ENCODE measurements at regions of chr2 and their contacts with region 1.

Region 1: DNA sequence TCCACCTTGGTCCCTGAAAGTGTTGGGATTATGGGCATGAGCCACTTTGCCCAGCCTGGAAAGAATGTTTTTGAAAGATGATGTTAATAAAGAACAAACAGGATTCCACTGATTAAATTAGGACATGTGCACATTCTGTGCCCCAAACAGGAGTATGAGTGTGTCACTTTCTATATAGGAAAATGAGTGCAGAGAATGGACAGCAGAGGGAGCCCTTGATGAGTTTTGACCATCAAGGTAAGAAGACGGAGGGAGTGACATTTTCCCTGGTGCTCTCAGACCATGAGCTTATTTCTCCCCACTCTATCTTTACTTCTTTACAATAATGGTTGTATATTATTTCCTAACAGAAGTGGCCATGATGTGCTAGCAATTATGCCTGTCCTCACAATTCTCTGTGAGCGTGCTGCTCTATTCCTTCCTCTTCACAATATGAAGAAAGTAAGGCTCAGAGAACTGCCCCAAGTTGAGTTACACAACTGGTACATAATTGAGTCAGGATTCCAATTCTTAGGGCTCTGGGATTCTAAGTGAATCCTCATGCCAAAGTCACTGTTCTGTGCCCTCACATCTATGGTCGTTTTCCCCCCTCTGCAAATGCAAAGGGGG is 20.6 kb downstream of the RPL37A start:
- DNase-seq: no peak
- ATAC-seq: peak; percentile 86
- H3K4me3 ChIP-seq: no peak overlapping the region
- H3K27ac ChIP-seq: no peak overlapping the region
- H3K4me1 ChIP-seq: no peaks in the 10 kb centered on the region
- H3K27me3 ChIP-seq: no peaks in the 10 kb centered on the region
- CTCF ChIP-seq: peak; percentile 85

Region 2: DNA sequence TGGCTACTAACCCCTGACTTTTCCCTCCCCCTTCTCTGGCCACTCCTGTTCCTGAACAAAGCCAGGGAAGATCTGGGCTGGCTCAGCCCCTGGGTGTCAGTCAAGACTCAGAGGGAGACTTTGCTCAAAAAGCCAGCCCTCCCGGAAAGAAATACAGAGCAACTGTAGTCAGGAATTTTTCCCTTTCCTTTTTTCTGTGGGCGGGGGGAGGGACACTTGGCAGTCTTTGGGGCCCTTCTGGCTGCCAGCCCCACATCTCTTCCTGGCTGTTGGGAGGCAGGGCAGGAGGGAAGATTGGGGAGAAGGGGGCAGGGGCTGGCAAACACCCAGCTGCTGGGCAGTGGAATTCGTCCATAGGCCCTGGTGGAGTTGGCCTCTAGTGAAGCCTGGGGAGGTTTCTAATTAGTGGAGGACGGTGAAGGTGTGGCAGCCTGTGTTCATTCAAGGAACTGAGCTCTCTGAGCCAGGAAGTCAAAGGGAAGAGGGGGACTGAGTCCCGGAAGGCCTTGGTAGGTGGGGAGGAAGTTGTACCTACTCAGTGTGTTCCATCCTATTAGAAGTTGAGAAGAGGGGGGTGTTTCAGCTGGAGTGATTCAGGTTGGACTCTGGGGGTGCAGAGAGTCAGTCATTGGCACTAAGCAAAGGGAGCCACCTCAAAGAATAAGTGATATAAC is 124.9 kb after region 1 on chr2:
- intact Hi-C with region 1: no loop called
- DNase-seq: no peak
- ATAC-seq: no peak
- H3K4me3 ChIP-seq: no peak overlapping the region
- H3K27ac ChIP-seq: peak overlapping the region; percentile 17
- H3K4me1 ChIP-seq: peaks cover 7% of the 10 kb centered on the region
- H3K27me3 ChIP-seq: peaks cover 11% of the 10 kb centered on the region
- CTCF ChIP-seq: no peak

Region 3: GRCh38 chr2:216666461-216667233 is 147.4 kb after region 1 on chr2:
- intact Hi-C with region 1: loop called (anchors 5 kb)
- DNase-seq: peak; percentile 75
- ATAC-seq: peak; percentile 88
- H3K4me3 ChIP-seq: no peak overlapping the region
- H3K27ac ChIP-seq: no peak overlapping the region
- H3K4me1 ChIP-seq: peaks cover 6% of the 10 kb centered on the region
- H3K27me3 ChIP-seq: no peaks in the 10 kb centered on the region
- CTCF ChIP-seq: peak; percentile 97